ENCODE measurements at regions of chr17 and their contacts with region 1.

Region 1: GRCh38 chr17:66906321-66907278 is 57.9 kb upstream of the CACNG4 start:
- DNase-seq: peak; percentile 72
- H3K4me3 ChIP-seq: no peak overlapping the region
- H3K27ac ChIP-seq: no peak overlapping the region
- H3K4me1 ChIP-seq: peaks cover 10% of the 10 kb centered on the region
- H3K27me3 ChIP-seq: peaks cover 44% of the 10 kb centered on the region
- CTCF ChIP-seq: peak; percentile 91

Region 2: DNA sequence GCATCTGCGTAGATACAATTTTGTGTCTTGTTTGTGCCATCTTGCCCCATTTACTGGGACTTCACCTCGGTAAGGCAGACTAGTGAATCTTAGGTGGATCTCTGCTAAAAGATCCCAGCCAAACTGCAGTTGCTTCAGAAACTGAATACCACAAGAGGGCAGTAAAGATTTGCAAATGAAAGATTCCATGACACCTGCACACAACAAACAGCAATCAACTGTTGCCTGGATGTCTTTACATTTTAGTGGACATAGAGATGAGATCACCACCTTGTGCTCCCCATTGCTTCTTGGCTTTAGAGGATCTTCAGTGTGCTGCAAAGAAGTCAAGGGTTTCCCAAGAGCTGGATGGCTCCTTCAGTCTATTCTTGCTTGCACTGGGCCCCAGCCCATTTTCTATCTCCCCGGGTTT is 190.8 kb before region 1 on chr17:
- intact Hi-C with region 1: loop called (anchors 5 kb)
- DNase-seq: no peak
- H3K4me3 ChIP-seq: no peak overlapping the region
- H3K27ac ChIP-seq: no peak overlapping the region
- H3K4me1 ChIP-seq: peaks cover 29% of the 10 kb centered on the region
- H3K27me3 ChIP-seq: no peaks in the 10 kb centered on the region
- CTCF ChIP-seq: peak; percentile 79

Region 3: GRCh38 chr17:67183531-67183930 is 276.9 kb after region 1 on chr17:
- intact Hi-C with region 1: no loop called
- DNase-seq: no peak
- H3K4me3 ChIP-seq: no peak overlapping the region
- H3K27ac ChIP-seq: no peak overlapping the region
- H3K4me1 ChIP-seq: peaks cover 13% of the 10 kb centered on the region
- H3K27me3 ChIP-seq: no peaks in the 10 kb centered on the region
- CTCF ChIP-seq: no peak

Measured in left ventricle myocardium inferior (tissue), 1 donor.